ENCODE measurements at regions of chr21 and their contacts with region 1.

Region 1: DNA sequence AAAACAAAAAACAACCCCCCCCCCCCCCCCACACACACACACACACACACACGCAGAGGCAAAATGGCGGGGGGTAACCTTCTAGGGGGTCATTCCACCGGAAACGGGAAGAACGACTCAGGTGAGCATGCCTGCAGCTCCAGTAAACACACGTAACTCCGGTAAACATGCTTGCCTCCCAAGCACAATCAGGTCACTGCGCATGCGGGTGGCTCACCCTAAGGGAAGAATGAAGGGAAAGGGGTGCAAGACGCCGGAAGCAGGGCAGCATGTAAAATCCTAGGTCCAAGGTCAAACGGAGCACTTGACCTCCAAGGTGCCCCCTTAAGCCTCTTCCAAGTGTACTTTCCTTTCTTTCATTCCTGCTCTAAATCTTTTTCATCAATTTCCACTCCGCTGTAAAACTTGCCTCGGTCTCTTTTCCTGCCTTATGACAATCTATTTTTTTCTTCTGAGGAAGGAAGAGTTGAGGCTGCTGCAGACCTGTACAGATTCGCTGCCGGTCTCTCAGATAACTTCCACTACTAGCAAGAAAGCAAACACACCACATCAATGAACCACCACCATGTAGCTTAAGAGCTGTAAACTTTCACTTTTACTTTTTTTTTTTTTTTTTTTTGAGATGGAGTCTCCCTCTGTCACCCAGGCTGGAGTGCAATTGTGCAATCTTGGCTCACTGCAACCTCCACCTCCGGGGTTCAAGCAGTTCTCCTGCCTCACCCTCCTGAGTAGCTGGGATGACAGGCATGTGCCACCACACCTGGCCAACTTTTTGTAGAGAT is 21.0 kb upstream of the CBR3 start:
- DNase-seq: peak in 2 of 4 donors; percentile 30 to 49
- ATAC-seq: no peak
- H3K4me3 ChIP-seq: no peak overlapping the region
- H3K27ac ChIP-seq: no peak overlapping the region
- H3K4me1 ChIP-seq: peaks cover 5% of the 10 kb centered on the region
- H3K27me3 ChIP-seq: no peaks in the 10 kb centered on the region
- CTCF ChIP-seq: no peak
- POLR2A ChIP-seq: no peak

Region 2: GRCh38 chr21:36059823-36060158 is 54.0 kb before region 1 on chr21:
- intact Hi-C with region 1: loop called (anchors 10 kb)
- DNase-seq: peak in 2 of 4 donors; percentile 41 to 52
- ATAC-seq: peak; percentile 33
- H3K4me3 ChIP-seq: peak overlapping the region; percentile 56 to 96
- H3K27ac ChIP-seq: peak overlapping the region; percentile 73 to 95 (median 91)
- H3K4me1 ChIP-seq: peaks cover 23% of the 10 kb centered on the region
- H3K27me3 ChIP-seq: no peaks in the 10 kb centered on the region
- CTCF ChIP-seq: no peak
- POLR2A ChIP-seq: no peak

Region 3: GRCh38 chr21:36260030-36260787 is 146.4 kb after region 1 on chr21:
- intact Hi-C with region 1: no loop called
- DNase-seq: peak; percentile 55 to 74 (median 64)
- ATAC-seq: peak; percentile 91
- H3K4me3 ChIP-seq: peak overlapping the region in 1 of 2 donors; percentile 1
- H3K27ac ChIP-seq: peak overlapping the region; percentile 57 to 78 (median 72)
- H3K4me1 ChIP-seq: peaks cover 7% of the 10 kb centered on the region
- H3K27me3 ChIP-seq: no peaks in the 10 kb centered on the region
- CTCF ChIP-seq: peak; percentile 64 to 86 (median 78)
- POLR2A ChIP-seq: no peak

Measured in body of pancreas (tissue), 4 donors.